PC-3 (cell line): ENCODE measurements at regions of chr21 and their contacts with region 1.

Region 1: GRCh38 chr21:44752634-44753291 is 41.4 kb upstream of the TSPEAR start:
- DNase-seq: peak; percentile 98
- ATAC-seq: peak; percentile 93
- H3K4me3 ChIP-seq: peak overlapping the region; percentile 3; the same call in 1 of the 2 replicates
- H3K27ac ChIP-seq: peak overlapping the region; percentile 78
- H3K4me1 ChIP-seq: peaks cover 41% of the 10 kb centered on the region
- H3K27me3 ChIP-seq: no peaks in the 10 kb centered on the region
- CTCF ChIP-seq: peak; percentile 37

Region 2: DNA sequence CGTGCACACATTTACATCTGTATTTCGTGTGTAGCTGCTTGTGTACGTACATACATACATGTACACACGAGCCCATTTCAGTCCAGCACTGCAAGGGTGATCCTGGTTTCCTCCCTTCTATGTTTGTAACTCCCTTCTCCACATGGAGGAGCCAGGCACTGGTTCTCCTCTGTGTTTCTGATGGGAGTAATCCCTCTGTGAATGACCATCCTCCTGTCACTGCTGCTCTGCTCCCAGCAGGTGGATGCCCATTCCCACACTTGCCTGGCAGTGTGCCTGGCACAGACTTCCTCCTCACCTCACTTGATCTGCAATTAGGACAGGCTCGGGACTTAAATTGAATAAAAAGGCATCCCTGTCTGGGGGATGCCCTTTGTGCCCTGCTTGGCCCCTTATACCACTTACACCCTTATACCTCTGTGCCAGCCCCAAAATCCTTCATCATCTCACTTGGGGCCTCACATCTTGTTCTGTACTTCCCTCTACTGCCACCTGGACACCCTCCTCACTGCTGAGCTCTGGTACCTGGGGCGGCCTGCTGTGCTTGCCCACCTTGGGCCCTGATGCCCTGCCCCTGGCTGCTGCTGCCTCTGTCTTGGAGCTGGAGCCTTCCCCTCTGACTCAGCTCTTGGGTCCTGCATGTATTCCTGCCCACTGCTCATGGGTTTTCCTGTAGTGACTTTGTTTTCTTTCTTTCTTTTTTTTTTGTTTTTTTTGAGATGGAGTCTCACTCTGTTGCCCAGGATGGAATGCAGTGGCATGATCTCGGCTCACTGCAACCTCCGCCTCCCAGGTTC is 703.4 kb before region 1 on chr21:
- CTCF ChIA-PET with region 1: interaction called, 19 read pairs
- POLR2A ChIA-PET with region 1: no interaction called
- intact Hi-C with region 1: no loop called
- DNase-seq: no peak
- ATAC-seq: 0 out of 2 replicates have a peak, but pooled peaks have one; percentile 24
- H3K4me3 ChIP-seq: no peak overlapping the region
- H3K27ac ChIP-seq: no peak overlapping the region
- H3K4me1 ChIP-seq: no peaks in the 10 kb centered on the region
- H3K27me3 ChIP-seq: no peaks in the 10 kb centered on the region
- CTCF ChIP-seq: no peak